Spleen (tissue), 13 donors: ENCODE measurements at regions of chrX and their contacts with region 1.

Region 1: DNA sequence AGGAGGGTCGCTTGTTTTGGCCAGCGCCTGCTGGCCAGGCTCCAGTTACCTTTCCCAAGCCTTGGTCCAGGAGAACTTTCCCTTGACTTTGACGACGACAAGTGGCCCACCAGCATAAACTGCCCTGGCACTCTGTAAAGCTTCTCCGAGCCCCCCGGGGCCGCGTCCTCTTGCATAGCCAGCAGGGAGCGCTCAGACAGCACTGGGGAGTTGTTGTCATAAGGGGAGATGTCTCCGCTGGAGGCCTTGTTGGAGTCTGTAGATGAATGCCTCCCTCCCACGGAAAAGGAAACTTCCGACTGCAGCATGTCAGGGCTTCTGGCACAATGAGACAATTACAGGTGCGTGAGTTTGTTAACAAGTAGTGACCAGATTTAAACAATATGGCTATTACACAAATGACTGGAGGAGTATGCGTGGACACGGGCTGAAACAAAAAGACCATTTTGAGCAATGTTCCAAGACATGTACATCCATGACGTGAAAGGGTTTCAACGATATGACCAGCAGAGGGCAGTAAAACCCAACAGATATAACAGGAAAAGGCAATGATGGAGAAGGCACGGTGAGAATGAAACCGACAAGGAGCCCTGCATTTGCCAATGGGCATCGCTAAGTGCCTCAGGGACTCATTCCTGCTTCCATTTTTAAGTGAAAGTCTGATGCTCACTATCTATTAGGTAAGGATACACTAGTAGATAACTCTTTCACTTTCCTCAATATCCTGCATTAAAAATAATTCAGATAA is 33.0 kb downstream of the HCCS start:
- DNase-seq: peak; percentile 74
- H3K4me3 ChIP-seq: no peak overlapping the region
- H3K27ac ChIP-seq: no peak overlapping the region
- H3K4me1 ChIP-seq: peaks cover 0 to 9% (median 2%) of the 10 kb centered on the region in 6 donors
- H3K27me3 ChIP-seq: peaks cover 0 to 12% (median 3%) of the 10 kb centered on the region in 7 donors
- CTCF ChIP-seq: peak; percentile 16 to 79 (median 67)
- POLR2A ChIP-seq: no peak

Region 2: DNA sequence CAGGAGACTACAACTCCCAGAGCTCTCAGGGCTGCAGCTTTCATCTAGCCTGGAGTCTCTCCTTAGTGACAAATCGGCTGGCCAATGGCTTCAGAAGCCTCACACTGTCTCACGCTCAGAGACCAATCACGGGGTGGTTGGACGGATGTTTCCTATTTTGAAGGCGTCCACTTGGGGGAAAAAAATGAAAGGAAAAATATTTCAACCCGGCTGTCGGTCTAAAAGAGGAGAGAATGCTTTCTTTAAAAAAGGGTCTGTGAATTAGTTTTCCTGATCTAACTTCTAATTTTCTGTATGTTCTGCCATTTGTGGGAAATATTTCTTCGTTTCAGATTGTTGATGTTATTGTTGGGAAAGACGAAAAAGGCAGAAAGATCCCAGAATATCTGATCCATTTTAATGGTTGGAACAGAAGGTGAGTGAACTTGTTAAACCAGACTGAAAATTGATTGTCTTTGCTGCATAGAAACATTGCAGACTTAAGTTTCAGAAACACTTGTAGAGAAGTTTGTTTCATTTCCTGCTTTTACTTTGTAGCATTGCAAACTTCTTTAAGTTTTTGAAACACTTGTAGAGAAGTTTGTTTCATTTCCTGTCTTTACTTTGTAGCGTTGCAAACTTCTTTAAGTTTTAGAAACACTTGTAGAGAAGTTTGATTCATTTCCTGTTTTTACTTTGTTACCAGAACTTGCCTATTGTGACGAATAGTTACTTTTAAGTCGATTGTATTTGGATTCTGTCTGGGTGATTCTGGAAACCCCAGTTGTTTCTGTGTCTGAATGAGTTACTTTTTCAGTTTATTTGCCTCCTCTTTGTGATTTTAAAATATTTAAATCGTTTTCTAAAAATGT is 615.6 kb after region 1 on chrX:
- intact Hi-C with region 1: loop called (anchors 10 kb)
- DNase-seq: no peak
- H3K4me3 ChIP-seq: peak overlapping the region; percentile 40 to 82 (median 68)
- H3K27ac ChIP-seq: peak overlapping the region; percentile 39 to 97 (median 90)
- H3K4me1 ChIP-seq: peaks cover 0 to 54% (median 26%) of the 10 kb centered on the region in 6 donors
- H3K27me3 ChIP-seq: no peaks in the 10 kb centered on the region
- CTCF ChIP-seq: peak in 5 of 11 experiments; percentile 12 to 32 (median 19)
- POLR2A ChIP-seq: no peak